CD4-positive, alpha-beta memory T cell (primary cell): ENCODE measurements at regions of chr14 and their contacts with region 1.

Region 1: GRCh38 chr14:24160850-24161804 is at the start of gene IRF9:
- DNase-seq: peak; percentile 94 to 97 (median 95)
- H3K4me3 ChIP-seq: peak within 1 kb of the TSS; percentile 73 to 97
- H3K4me3 Mint-ChIP-seq: peak within 1 kb of the TSS; percentile 96 to 100 (median 99)
- H3K27ac ChIP-seq: peak within 1 kb of the TSS; percentile 90
- H3K27ac Mint-ChIP-seq: peak within 1 kb of the TSS; percentile 97 to 100 (median 99)
- H3K4me1 ChIP-seq: peaks cover 50% of the 10 kb centered on the region
- H3K4me1 Mint-ChIP-seq: peaks cover 29 to 60% (median 48%) of the 10 kb centered on the region in 4 donors
- H3K27me3 ChIP-seq: no peaks in the 10 kb centered on the region
- H3K27me3 Mint-ChIP-seq: no peaks in the 10 kb centered on the region
- total RNA-seq, gene IRF9: 154 to 157 TPM

Region 2: GRCh38 chr14:23469127-23469905 is 691.8 kb before region 1 on chr14 and contains the start of gene NGDN:
- CTCF ChIA-PET with region 1: no interaction called
- POLR2A ChIA-PET with region 1: no interaction called
- intact Hi-C with region 1: no loop called
- DNase-seq: peak; percentile 93 to 99 (median 97)
- H3K4me3 ChIP-seq: peak within 1 kb of the TSS; percentile 75 to 78
- H3K4me3 Mint-ChIP-seq: peak within 1 kb of the TSS in 1 of 8 donors; percentile 35
- H3K27ac ChIP-seq: peak within 1 kb of the TSS; percentile 89
- H3K27ac Mint-ChIP-seq: peak within 1 kb of the TSS in 3 of 7 donors; percentile 36 to 78 (median 43)
- H3K4me1 ChIP-seq: peaks cover 17% of the 10 kb centered on the region
- H3K4me1 Mint-ChIP-seq: peaks cover 0 to 7% (median 6%) of the 10 kb centered on the region in 4 donors
- H3K27me3 ChIP-seq: no peaks in the 10 kb centered on the region
- H3K27me3 Mint-ChIP-seq: no peaks in the 10 kb centered on the region
- total RNA-seq, gene NGDN: 60.7 to 63.5 TPM

Region 3: GRCh38 chr14:24013654-24014514 is 147.2 kb before region 1 on chr14:
- CTCF ChIA-PET with region 1: no interaction called
- POLR2A ChIA-PET with region 1: no interaction called
- intact Hi-C with region 1: loop called (anchors 2 kb)
- DNase-seq: peak; percentile 60 to 77 (median 70)
- H3K4me3 ChIP-seq: no peak overlapping the region
- H3K4me3 Mint-ChIP-seq: no peak overlapping the region
- H3K27ac ChIP-seq: no peak overlapping the region
- H3K27ac Mint-ChIP-seq: no peak overlapping the region
- H3K4me1 ChIP-seq: peaks cover 19% of the 10 kb centered on the region
- H3K4me1 Mint-ChIP-seq: peaks cover 19 to 27% (median 23%) of the 10 kb centered on the region in 4 donors
- H3K27me3 ChIP-seq: no peaks in the 10 kb centered on the region
- H3K27me3 Mint-ChIP-seq: peaks cover 0 to 3% of the 10 kb centered on the region in 2 donors

Region 4: DNA sequence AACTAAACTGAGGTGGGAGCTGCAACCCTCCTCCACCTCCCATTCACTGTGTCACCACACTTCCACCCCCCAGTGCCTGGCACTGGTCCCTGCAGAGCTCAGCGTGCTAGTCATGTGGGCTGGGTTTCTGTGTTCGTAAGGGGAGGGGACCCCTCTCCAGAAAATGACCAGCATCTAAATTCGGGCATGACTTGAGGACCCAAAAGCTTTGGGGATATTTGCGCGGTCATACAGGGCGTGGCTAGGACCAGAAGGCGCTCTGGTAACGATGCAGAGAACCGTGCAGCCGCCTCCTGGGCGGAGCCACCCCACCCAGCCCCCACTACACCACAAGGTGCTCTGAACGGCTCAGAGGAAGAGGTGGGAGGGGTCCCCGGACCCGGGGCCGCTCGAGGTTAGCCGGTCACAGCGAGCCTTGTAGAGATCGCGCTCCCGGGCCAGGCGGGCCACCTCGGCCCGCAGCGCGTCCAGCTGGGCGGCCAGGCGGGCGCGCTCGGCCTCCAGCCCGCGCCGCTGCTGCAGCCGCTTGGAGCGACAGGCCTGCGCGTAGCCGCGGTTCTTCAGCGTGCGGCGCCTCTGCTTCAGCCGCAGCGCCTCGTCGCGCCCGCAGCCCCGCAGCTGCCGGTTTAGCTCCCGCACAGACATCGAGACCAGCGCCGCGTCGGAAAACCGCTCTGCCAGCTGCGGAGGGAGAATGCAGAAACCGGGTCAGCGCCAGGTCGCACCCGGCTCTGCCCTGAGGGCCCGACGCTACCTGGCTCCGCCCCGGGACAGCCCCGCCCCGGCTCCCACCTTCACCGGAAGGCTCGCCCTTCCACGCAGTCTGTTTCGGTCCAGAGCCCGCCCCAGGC is 80.0 kb before region 1 on chr14:
- CTCF ChIA-PET with region 1: interaction called, 7 read pairs
- POLR2A ChIA-PET with region 1: interaction called, 14 read pairs
- intact Hi-C with region 1: no loop called
- DNase-seq: peak; percentile 64 to 77 (median 67)
- H3K4me3 ChIP-seq: peak overlapping the region; percentile 39 to 60
- H3K4me3 Mint-ChIP-seq: peak overlapping the region; percentile 81 to 90 (median 87)
- H3K27ac ChIP-seq: peak overlapping the region; percentile 50
- H3K27ac Mint-ChIP-seq: peak overlapping the region; percentile 64 to 92 (median 88)
- H3K4me1 ChIP-seq: peaks cover 14% of the 10 kb centered on the region
- H3K4me1 Mint-ChIP-seq: peaks cover 10 to 27% (median 15%) of the 10 kb centered on the region in 4 donors
- H3K27me3 ChIP-seq: no peaks in the 10 kb centered on the region
- H3K27me3 Mint-ChIP-seq: no peaks in the 10 kb centered on the region

Region 5: GRCh38 chr14:24135834-24136542 is 25.1 kb before region 1 on chr14 and contains the start of gene PSME1:
- CTCF ChIA-PET with region 1: interaction called, 53 read pairs
- POLR2A ChIA-PET with region 1: interaction called, 49 read pairs
- intact Hi-C with region 1: loop called (anchors 1 kb)
- DNase-seq: peak; percentile 92 to 94 (median 93)
- H3K4me3 ChIP-seq: peak within 1 kb of the TSS; percentile 30 to 87
- H3K4me3 Mint-ChIP-seq: peak within 1 kb of the TSS; percentile 87 to 94 (median 92)
- H3K27ac ChIP-seq: peak within 1 kb of the TSS; percentile 84
- H3K27ac Mint-ChIP-seq: peak within 1 kb of the TSS; percentile 88 to 96 (median 94)
- H3K4me1 ChIP-seq: peaks cover 59% of the 10 kb centered on the region
- H3K4me1 Mint-ChIP-seq: peaks cover 35 to 70% (median 55%) of the 10 kb centered on the region in 4 donors
- H3K27me3 ChIP-seq: no peaks in the 10 kb centered on the region
- H3K27me3 Mint-ChIP-seq: no peaks in the 10 kb centered on the region
- total RNA-seq, gene PSME1: 257 to 273 TPM

Region 6: DNA sequence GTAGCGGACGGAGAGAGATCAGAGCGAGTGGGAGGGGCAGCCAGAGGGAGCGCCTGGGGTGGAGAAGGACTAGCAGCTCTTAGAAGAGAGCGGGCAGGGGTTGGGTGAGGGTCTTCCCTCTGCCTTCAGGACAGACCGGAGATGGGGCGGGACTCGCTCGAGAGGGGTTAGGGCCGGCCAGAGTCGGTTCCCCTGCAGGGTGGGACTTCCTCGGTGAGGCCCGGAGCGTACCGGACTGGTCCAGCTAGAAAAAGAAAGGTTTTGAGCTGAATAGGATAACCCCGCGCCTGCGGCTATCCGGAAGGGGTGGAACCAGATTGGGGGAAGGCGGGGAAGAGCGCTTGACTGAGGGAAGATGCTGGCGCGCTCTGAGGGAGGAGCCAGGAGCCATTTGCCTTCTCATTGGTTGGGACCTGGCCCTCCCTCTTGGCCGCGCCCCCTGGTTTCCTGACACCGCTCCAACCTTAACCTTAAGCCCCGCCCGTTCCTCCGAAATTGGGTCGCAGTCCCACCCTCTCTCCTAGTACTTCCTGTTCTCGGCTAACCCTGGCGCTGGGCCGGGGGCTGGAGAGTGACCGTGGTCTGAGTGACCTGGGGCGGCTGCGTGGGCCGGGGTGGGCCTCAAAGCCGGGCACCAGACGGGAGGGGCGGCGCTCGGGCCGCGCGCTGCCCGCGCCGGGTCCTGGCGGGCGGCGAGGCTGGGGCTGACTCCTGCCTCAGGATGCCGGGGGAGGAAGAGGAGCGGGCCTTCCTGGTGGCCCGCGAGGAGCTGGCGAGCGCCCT is 14.0 kb before region 1 on chr14 and contains the start of gene RNF31:
- CTCF ChIA-PET with region 1: interaction called, 110 read pairs
- POLR2A ChIA-PET with region 1: interaction called, 162 read pairs
- intact Hi-C with region 1: loop called (anchors 1 kb)
- DNase-seq: peak; percentile 95 to 99 (median 97)
- H3K4me3 ChIP-seq: peak within 1 kb of the TSS; percentile 85 to 99
- H3K4me3 Mint-ChIP-seq: peak within 1 kb of the TSS; percentile 97 to 100 (median 98)
- H3K27ac ChIP-seq: peak within 1 kb of the TSS; percentile 92
- H3K27ac Mint-ChIP-seq: peak within 1 kb of the TSS; percentile 95 to 99 (median 98)
- H3K4me1 ChIP-seq: peaks cover 63% of the 10 kb centered on the region
- H3K4me1 Mint-ChIP-seq: peaks cover 32 to 80% (median 54%) of the 10 kb centered on the region in 4 donors
- H3K27me3 ChIP-seq: no peaks in the 10 kb centered on the region
- H3K27me3 Mint-ChIP-seq: no peaks in the 10 kb centered on the region
- total RNA-seq, gene RNF31: 108 to 113 TPM

Region 7: DNA sequence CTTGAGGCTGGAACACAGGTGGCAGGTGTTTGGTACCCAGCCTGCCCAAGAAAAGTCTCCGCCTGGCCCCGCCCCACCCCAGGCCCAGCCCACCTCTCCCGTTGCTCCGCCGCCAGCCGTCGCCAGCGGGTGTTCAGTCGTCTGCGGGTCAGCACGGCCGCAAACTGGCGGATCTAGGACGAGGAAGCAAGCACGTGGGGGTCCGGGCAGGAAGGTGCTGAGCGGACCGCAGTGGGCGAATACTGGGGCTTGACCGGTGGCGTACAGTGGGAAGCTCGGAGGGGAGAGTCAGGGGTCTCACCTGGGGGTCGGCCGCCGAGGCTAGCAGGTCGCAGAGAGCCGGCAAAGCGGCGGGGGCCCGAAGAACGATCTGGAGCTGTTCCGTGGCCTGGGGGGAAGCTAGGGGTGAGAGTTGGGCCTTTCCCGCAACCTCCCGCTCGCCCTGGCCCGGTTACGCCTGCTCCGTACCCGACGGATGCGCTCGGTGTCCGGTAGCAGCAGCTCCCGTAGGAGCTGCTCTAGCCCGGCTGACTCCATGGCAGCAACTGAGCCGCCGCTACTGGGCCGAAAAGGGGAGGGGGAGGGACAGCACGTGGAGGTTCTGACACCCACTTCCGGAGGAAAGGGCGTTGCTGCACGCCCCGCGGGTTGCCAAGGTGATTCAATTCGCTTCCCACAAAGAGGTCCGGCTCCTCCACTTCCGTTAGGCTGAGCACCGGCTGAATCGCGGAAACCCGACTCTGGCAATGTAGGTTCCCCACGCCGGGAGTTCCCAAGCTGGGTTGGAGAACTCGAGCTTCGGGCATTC is 27.3 kb after region 1 on chr14 and contains the start of gene IPO4:
- CTCF ChIA-PET with region 1: interaction called, 11 read pairs
- POLR2A ChIA-PET with region 1: interaction called, 75 read pairs
- intact Hi-C with region 1: loop called (anchors 1 kb)
- DNase-seq: peak; percentile 92 to 98 (median 95)
- H3K4me3 ChIP-seq: peak within 1 kb of the TSS; percentile 31 to 90
- H3K4me3 Mint-ChIP-seq: peak within 1 kb of the TSS; percentile 90 to 96 (median 93)
- H3K27ac ChIP-seq: peak within 1 kb of the TSS; percentile 80
- H3K27ac Mint-ChIP-seq: peak within 1 kb of the TSS; percentile 93 to 96 (median 96)
- H3K4me1 ChIP-seq: peaks cover 23% of the 10 kb centered on the region
- H3K4me1 Mint-ChIP-seq: peaks cover 20 to 56% (median 36%) of the 10 kb centered on the region in 4 donors
- H3K27me3 ChIP-seq: no peaks in the 10 kb centered on the region
- H3K27me3 Mint-ChIP-seq: no peaks in the 10 kb centered on the region
- total RNA-seq, gene IPO4: 22.4 to 30.2 TPM

Region 8: GRCh38 chr14:24259252-24259995 is 98.3 kb after region 1 on chr14:
- CTCF ChIA-PET with region 1: no interaction called
- POLR2A ChIA-PET with region 1: no interaction called
- intact Hi-C with region 1: no loop called
- DNase-seq: no peak
- H3K4me3 ChIP-seq: no peak overlapping the region
- H3K4me3 Mint-ChIP-seq: no peak overlapping the region
- H3K27ac ChIP-seq: no peak overlapping the region
- H3K27ac Mint-ChIP-seq: peak overlapping the region in 1 of 7 donors; percentile 52
- H3K4me1 ChIP-seq: no peaks in the 10 kb centered on the region
- H3K4me1 Mint-ChIP-seq: no peaks in the 10 kb centered on the region
- H3K27me3 ChIP-seq: no peaks in the 10 kb centered on the region
- H3K27me3 Mint-ChIP-seq: no peaks in the 10 kb centered on the region

Region 9: DNA sequence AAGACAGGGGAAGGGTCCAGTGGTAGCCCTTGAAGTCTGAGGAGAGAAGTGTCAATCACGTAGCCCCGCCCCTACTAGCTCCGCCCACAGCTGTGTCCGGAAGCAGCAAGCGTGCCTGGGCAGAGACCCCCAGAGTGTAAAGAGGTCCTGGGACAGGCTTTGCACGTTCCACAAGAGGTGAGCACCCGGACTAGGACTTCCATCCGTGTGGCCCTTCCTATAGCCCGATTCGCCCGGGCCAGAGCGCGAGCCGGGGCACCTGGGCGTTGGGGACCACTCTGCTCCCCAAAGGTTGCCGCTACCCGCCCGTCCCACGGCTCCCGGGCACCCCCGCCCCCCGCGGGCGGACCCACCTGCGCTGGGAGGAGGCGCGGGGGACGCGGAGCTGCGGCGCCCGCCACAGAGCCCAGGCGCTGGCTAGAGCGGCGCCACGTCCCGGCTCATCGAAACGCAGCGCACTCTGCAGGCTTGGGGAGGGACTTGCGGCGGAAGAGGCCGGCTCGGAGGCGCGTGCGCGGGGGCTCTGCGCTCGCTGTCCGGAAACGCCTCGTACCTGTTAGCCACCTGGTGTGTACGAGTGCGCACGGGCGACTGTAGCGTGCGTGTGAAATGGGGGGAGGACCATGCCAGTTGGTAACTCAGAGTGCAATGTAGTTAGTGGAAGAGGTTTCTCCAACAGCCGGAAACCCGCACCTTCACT is 110.2 kb after region 1 on chr14 and contains the start of gene RABGGTA:
- CTCF ChIA-PET with region 1: interaction called, 3 read pairs
- POLR2A ChIA-PET with region 1: interaction called, 17 read pairs
- intact Hi-C with region 1: no loop called
- DNase-seq: peak; percentile 95 to 98 (median 97)
- H3K4me3 ChIP-seq: peak within 1 kb of the TSS; percentile 86 to 91
- H3K4me3 Mint-ChIP-seq: peak within 1 kb of the TSS; percentile 90 to 95 (median 91)
- H3K27ac ChIP-seq: peak within 1 kb of the TSS; percentile 94
- H3K27ac Mint-ChIP-seq: peak within 1 kb of the TSS; percentile 91 to 100 (median 99)
- H3K4me1 ChIP-seq: peaks cover 33% of the 10 kb centered on the region
- H3K4me1 Mint-ChIP-seq: peaks cover 24 to 46% (median 39%) of the 10 kb centered on the region in 4 donors
- H3K27me3 ChIP-seq: no peaks in the 10 kb centered on the region
- H3K27me3 Mint-ChIP-seq: no peaks in the 10 kb centered on the region
- total RNA-seq, gene RABGGTA: 55.6 to 62.5 TPM